MCF 10A (cell line): ENCODE measurements at regions of chr14 and their contacts with region 1.

Region 1: GRCh38 chr14:22900081-22900799 is 17.2 kb downstream of the REM2 start:
- DNase-seq: peak; percentile 74
- H3K4me3 Mint-ChIP-seq: no peak overlapping the region
- H3K27ac Mint-ChIP-seq: no peak overlapping the region
- H3K4me1 Mint-ChIP-seq: peaks cover 17% of the 10 kb centered on the region
- H3K27me3 Mint-ChIP-seq: no peaks in the 10 kb centered on the region
- CTCF ChIP-seq: peak; percentile 59

Region 2: GRCh38 chr14:22653012-22653621 is 247.1 kb before region 1 on chr14:
- CTCF ChIA-PET with region 1: interaction called, 7 read pairs
- POLR2A ChIA-PET with region 1: no interaction called
- intact Hi-C with region 1: loop called (anchors 1 kb)
- DNase-seq: peak; percentile 87
- H3K4me3 Mint-ChIP-seq: no peak overlapping the region
- H3K27ac Mint-ChIP-seq: no peak overlapping the region
- H3K4me1 Mint-ChIP-seq: peaks cover 10% of the 10 kb centered on the region
- H3K27me3 Mint-ChIP-seq: no peaks in the 10 kb centered on the region
- CTCF ChIP-seq: peak; percentile 84

Region 3: GRCh38 chr14:22822571-22823098 is 77.6 kb before region 1 on chr14:
- CTCF ChIA-PET with region 1: interaction called, 15 read pairs
- POLR2A ChIA-PET with region 1: no interaction called
- intact Hi-C with region 1: loop called (anchors 2 kb)
- DNase-seq: peak; percentile 85
- H3K4me3 Mint-ChIP-seq: peak overlapping the region; percentile 29
- H3K27ac Mint-ChIP-seq: no peak overlapping the region
- H3K4me1 Mint-ChIP-seq: peaks cover 18% of the 10 kb centered on the region
- H3K27me3 Mint-ChIP-seq: no peaks in the 10 kb centered on the region
- CTCF ChIP-seq: peak; percentile 86

Region 4: DNA sequence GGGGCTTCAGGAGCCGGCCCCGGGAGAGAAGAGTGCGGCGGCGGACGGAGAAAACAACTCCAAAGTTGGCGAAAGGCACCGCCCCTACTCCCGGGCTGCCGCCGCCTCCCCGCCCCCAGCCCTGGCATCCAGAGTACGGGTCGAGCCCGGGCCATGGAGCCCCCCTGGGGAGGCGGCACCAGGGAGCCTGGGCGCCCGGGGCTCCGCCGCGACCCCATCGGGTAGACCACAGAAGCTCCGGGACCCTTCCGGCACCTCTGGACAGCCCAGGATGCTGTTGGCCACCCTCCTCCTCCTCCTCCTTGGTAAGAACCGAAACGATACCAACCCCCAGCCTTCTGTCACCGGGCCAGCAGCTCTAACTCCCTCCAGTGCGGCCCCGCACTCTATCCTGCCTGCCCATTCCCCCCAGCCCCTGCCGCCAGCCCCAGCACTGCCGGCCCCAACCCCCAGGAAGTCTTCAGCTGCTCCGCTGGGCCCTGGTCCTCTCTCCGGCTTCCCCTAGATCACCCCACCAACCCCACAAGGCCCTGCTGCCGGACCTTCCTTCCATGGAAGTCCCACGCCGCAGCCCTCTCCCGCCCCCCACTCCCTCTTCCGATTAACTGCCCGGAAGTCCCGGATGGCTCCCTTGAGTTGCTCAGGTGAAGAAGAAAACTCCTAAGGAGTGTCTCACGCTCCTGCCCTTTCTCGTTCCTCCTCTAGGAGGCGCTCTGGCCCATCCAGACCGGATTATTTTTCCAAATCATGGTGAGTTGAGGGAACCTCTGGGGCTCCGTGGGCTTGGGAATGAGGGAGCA is 28.0 kb before region 1 on chr14:
- CTCF ChIA-PET with region 1: interaction called, 111 read pairs
- POLR2A ChIA-PET with region 1: interaction called, 18 read pairs
- intact Hi-C with region 1: loop called (anchors 1 kb)
- DNase-seq: peak; percentile 90
- H3K4me3 Mint-ChIP-seq: peak overlapping the region; percentile 79
- H3K27ac Mint-ChIP-seq: peak overlapping the region; percentile 91
- H3K4me1 Mint-ChIP-seq: peaks cover 20% of the 10 kb centered on the region
- H3K27me3 Mint-ChIP-seq: no peaks in the 10 kb centered on the region
- CTCF ChIP-seq: peak; percentile 81

Region 5: DNA sequence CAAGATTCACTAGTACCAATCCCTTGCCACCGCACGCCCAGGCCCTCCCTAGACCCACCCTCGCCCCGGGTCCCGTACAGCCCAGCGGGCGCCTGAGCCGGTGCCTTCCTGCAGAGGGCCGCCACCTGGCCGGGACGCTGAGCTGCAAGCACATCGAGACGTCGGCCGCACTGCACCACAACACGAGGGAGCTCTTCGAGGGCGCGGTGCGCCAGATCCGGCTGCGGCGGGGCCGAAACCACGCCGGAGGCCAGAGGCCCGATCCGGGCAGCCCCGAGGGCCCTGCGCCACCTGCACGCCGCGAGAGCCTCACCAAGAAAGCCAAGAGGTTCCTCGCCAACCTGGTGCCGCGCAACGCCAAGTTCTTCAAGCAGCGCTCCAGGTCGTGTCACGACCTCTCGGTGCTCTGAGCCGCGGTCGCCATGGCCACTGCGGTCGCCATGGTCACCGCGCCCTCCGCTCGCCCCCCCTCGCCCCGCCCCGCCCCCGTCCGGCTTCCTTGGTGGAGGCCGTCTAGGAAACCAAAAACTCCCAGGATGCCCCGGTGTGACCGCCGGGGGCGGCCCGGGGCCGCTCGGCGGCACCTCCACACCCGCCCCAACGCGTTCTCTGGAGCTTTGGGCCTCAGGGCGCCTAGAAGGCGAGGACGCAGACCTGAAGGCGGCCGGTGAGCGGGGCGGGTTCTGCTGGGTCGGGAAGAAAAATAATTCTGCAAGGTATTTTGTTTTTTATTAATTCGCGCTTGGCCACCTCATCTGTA is 13.6 kb before region 1 on chr14:
- CTCF ChIA-PET with region 1: interaction called, 100 read pairs
- POLR2A ChIA-PET with region 1: interaction called, 29 read pairs
- intact Hi-C with region 1: no loop called
- DNase-seq: peak; percentile 82
- H3K4me3 Mint-ChIP-seq: peak overlapping the region; percentile 95
- H3K27ac Mint-ChIP-seq: peak overlapping the region; percentile 90
- H3K4me1 Mint-ChIP-seq: peaks cover 25% of the 10 kb centered on the region
- H3K27me3 Mint-ChIP-seq: no peaks in the 10 kb centered on the region
- CTCF ChIP-seq: no peak

Region 6: DNA sequence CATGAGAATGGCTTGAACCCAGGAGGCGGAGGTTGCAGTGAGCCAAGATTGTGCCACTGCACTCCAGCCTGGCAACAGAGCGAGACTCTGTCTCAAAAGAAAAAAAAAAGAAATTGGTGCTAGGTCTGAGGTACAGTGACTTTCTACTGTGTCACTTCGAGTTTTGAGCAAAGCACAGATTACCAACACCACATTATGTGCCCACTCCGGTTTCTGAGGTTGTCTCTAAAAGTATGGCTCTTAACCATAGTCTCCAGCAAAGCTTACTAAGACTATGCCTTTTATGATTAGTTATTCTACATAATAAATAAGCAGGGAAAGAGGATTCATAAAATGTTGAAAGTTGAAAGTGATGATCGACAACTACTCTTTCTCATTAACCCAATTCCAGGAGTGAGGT is 10.7 kb after region 1 on chr14:
- CTCF ChIA-PET with region 1: interaction called, 35 read pairs
- POLR2A ChIA-PET with region 1: interaction called, 4 read pairs
- intact Hi-C with region 1: no loop called
- DNase-seq: no peak
- H3K4me3 Mint-ChIP-seq: no peak overlapping the region
- H3K27ac Mint-ChIP-seq: no peak overlapping the region
- H3K4me1 Mint-ChIP-seq: peaks cover 5% of the 10 kb centered on the region
- H3K27me3 Mint-ChIP-seq: no peaks in the 10 kb centered on the region
- CTCF ChIP-seq: no peak

Region 7: GRCh38 chr14:22918804-22919600 is 18.8 kb after region 1 on chr14 and contains the start of gene RBM23:
- CTCF ChIA-PET with region 1: interaction called, 35 read pairs
- POLR2A ChIA-PET with region 1: interaction called, 12 read pairs
- intact Hi-C with region 1: no loop called
- DNase-seq: peak; percentile 100
- H3K4me3 Mint-ChIP-seq: peak within 1 kb of the TSS; percentile 87
- H3K27ac Mint-ChIP-seq: peak within 1 kb of the TSS; percentile 100
- H3K4me1 Mint-ChIP-seq: peaks cover 31% of the 10 kb centered on the region
- H3K27me3 Mint-ChIP-seq: no peaks in the 10 kb centered on the region
- CTCF ChIP-seq: no peak
- total RNA-seq, gene RBM23: 57.6 and 60.6 TPM in 2 replicates